A549 (cell line): ENCODE measurements at regions of chr1 and their contacts with region 1.

Region 1: DNA sequence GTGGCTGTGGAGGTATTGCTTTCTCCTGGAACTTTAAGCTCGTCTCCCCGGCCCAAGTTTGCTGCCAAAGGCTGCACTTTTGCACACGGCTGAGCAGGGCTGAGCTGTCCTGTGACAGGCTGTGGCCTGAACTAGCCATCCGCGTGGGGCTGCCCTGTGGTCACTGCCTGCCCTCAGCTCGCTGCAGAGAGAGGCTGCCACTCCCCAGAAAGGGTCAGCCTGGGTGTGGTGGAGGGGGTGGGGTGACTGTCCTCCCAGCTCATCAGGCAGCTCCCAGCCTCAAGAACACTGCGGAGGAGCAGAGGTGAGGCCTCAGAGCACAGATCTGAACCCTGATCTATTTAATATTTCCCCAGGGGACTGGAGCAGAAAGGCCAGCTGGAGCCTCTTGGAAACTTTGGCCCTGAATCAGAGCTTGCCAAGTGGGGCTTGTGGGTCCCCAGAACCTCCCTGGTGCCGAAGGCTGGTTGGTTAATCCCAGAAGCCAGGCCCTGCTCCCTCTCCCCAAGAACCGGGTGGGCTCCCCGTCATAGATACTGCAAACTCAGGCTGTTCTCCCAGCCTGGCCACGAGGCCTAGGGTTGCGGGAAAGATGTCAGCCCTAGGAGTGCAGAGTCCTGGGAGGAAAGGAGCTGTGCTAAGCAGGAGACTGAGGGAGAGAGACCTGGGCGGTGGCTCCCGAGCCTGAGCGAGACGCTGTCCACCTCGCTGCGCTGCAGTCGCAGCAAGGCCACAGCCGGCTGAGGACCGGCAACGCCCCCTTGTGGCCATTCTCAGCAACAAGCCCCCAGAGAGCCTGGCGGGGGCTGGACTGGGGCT is 125.1 kb upstream of the IPO9 start:
- DNase-seq: peak; percentile 79 to 85
- ATAC-seq: peak; percentile 92 to 96
- H3K4me3 ChIP-seq: no peak overlapping the region
- H3K27ac ChIP-seq: peak overlapping the region; percentile 75 to 85
- H3K4me1 ChIP-seq: peaks cover 21% of the 10 kb centered on the region
- CTCF ChIP-seq: peak; percentile 97
- EP300 ChIP-seq: no peak
- POLR2A ChIP-seq: no peak
- RAD21 ChIP-seq: peak; percentile 98 to 99

Region 2: GRCh38 chr1:201444792-201445191 is 259.0 kb before region 1 on chr1:
- CTCF ChIA-PET with region 1: no interaction called
- POLR2A ChIA-PET with region 1: no interaction called
- DNase-seq: no peak
- ATAC-seq: no peak
- H3K4me3 ChIP-seq: no peak overlapping the region
- H3K27ac ChIP-seq: no peak overlapping the region
- H3K4me1 ChIP-seq: peaks cover 17% of the 10 kb centered on the region
- CTCF ChIP-seq: no peak
- EP300 ChIP-seq: no peak
- POLR2A ChIP-seq: no peak
- RAD21 ChIP-seq: no peak

Region 3: DNA sequence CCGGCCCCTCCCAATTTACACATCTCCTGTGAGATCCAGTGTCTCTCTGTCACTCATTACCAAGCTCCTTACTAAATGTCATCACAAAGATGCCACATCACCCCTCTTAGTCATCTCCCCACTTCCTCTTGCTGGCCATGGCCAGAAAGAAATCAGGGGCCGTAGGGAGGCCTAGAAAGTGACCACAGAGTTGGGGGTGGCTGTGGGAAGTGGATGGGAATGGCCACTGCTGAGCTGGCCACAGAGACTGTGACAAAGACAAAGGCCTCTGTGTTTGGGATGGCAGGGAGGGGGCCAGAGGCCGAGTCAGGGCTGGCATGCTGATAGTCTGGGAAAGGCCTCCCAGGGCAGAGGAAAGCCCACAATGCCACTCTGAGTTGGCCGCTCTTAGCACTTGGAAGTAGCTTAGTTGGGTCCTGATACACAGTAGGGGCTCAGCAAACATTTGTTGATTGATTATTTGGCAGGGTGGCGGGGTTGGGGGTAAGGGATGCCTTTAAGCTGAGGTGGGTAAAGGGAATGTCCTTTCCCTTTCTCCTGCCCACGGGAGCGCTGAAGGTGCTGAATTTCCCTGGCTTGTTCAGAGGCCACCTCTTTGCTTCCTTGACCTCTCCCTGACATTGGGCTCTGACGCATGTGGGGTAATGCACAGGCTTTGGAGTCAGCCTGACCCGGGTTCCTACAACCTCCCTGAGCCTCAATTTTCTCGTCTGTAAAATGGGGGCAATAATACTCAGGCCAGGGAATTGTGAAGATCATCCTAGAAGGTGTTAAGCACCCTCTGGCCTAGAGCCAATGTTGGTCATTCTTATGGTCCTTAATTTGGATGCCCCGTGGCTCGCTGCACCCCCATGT is 151.7 kb before region 1 on chr1:
- CTCF ChIA-PET with region 1: interaction called, 437 read pairs
- POLR2A ChIA-PET with region 1: no interaction called
- DNase-seq: peak; percentile 57 to 69
- ATAC-seq: peak; percentile 75 to 78
- H3K4me3 ChIP-seq: no peak overlapping the region
- H3K27ac ChIP-seq: peak overlapping the region; percentile 59 to 86
- H3K4me1 ChIP-seq: peaks cover 11% of the 10 kb centered on the region
- CTCF ChIP-seq: no peak
- EP300 ChIP-seq: no peak
- POLR2A ChIP-seq: no peak
- RAD21 ChIP-seq: no peak

Region 4: GRCh38 chr1:201582705-201583442 is 121.0 kb before region 1 on chr1:
- CTCF ChIA-PET with region 1: interaction called, 11 read pairs
- POLR2A ChIA-PET with region 1: no interaction called
- DNase-seq: no peak
- ATAC-seq: peak; percentile 45 to 51; a peak in 3 of 6 replicates
- H3K4me3 ChIP-seq: no peak overlapping the region
- H3K27ac ChIP-seq: peak overlapping the region; percentile 23 to 73; a peak in 4 of 6 replicates
- H3K4me1 ChIP-seq: peaks cover 37% of the 10 kb centered on the region
- CTCF ChIP-seq: no peak
- EP300 ChIP-seq: no peak
- POLR2A ChIP-seq: no peak
- RAD21 ChIP-seq: no peak

Region 5: GRCh38 chr1:201602413-201603265 is 101.2 kb before region 1 on chr1:
- CTCF ChIA-PET with region 1: interaction called, 22 read pairs
- POLR2A ChIA-PET with region 1: no interaction called
- DNase-seq: peak; percentile 64 to 80
- ATAC-seq: peak; percentile 80 to 89
- H3K4me3 ChIP-seq: no peak overlapping the region
- H3K27ac ChIP-seq: peak overlapping the region; percentile 89 to 90
- H3K4me1 ChIP-seq: peaks cover 85% of the 10 kb centered on the region
- CTCF ChIP-seq: no peak
- EP300 ChIP-seq: peak; percentile 53 to 76; a peak in 3 of 5 replicates
- POLR2A ChIP-seq: no peak
- RAD21 ChIP-seq: 0 out of 5 replicates have a peak, but pooled peaks have one; percentile 4 to 19

Region 6: GRCh38 chr1:201660931-201661822 is 42.7 kb before region 1 on chr1:
- CTCF ChIA-PET with region 1: interaction called, 15 read pairs
- POLR2A ChIA-PET with region 1: no interaction called
- DNase-seq: no peak
- ATAC-seq: peak in 1 of 2 experiments; percentile 19; a peak in 1 of 6 replicates
- H3K4me3 ChIP-seq: no peak overlapping the region
- H3K27ac ChIP-seq: no peak overlapping the region
- H3K4me1 ChIP-seq: 0 out of 3 replicates have a peak, but pooled peaks cover 7% of the 10 kb centered on the region
- CTCF ChIP-seq: no peak
- EP300 ChIP-seq: no peak
- POLR2A ChIP-seq: no peak
- RAD21 ChIP-seq: no peak

Region 7: DNA sequence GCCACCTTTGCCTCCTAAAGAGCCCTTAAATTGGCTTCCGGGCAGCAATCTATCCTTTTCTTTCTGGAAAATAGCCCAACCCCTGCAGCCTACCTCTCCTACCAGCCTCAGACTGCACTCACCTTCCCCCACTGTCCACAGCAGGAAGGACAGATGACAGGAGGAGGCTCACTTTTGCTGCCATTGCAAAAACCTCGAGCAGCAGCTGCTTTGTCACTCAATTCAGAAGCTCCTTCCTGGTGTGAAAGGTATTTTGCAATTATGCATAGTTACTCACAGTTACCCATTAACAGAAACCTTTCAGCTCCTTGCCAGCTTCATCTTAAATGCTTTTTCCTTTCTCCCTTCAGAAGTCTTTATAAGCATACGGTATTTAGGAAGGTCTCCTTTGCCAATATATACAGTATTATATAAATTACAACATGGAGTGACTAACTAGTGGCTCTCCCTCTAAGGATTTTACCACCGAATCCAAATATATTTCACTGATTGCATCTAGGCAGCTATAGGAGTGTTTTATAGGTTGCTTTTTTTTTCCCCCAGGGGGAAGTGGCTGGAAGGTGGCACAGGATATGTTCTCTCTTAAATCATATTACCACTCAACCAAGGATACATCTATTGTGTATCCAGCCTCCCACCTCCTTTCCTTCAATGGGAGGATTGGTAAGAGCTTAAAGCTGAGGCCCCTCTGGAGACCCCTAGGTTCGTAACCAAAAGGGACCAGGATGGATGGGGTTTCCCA is 16.9 kb before region 1 on chr1:
- CTCF ChIA-PET with region 1: interaction called, 34 read pairs
- POLR2A ChIA-PET with region 1: no interaction called
- DNase-seq: peak; percentile 22 to 33
- ATAC-seq: peak; percentile 30 to 56; a peak in 3 of 6 replicates
- H3K4me3 ChIP-seq: no peak overlapping the region
- H3K27ac ChIP-seq: peak overlapping the region in 1 of 2 experiments; percentile 48; a peak in 3 of 6 replicates
- H3K4me1 ChIP-seq: peaks cover 15% of the 10 kb centered on the region
- CTCF ChIP-seq: no peak
- EP300 ChIP-seq: no peak
- POLR2A ChIP-seq: no peak
- RAD21 ChIP-seq: no peak

Region 8: DNA sequence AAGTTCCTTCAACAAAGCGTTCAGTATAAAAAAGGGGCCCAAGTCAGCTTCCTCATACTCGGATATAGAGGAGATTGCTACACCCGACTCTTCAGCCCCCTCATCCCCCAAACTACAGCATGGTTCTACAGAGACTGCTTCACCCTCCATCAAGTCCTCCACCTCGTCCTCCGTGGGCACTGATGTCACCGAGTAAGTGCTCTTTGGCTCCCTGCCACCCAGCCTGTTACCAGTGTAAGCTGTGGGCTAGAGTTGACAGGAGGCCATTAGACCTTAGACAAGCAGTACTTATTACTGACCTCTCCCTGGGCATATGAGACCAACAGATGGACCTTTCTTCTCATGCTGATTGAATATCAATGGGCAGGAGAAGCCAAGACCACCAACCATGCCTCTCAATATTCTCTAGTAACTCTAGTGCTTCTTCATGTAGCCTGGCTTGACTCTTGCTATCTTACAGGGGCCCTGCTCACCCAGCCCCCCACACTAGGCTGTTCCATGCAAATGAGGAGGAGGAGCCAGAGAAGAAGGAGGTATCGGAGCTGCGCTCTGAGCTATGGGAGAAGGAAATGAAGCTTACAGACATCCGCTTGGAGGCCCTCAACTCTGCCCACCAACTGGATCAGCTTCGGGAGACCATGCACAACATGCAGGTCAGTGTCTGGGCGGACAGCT is 104.3 kb after region 1 on chr1:
- CTCF ChIA-PET with region 1: interaction called, 24 read pairs
- POLR2A ChIA-PET with region 1: no interaction called
- DNase-seq: no peak
- ATAC-seq: no peak
- H3K4me3 ChIP-seq: no peak overlapping the region
- H3K27ac ChIP-seq: no peak overlapping the region
- H3K4me1 ChIP-seq: no peaks in the 10 kb centered on the region
- CTCF ChIP-seq: no peak
- EP300 ChIP-seq: no peak
- POLR2A ChIP-seq: no peak
- RAD21 ChIP-seq: no peak